ENCODE measurements at regions of chr11 and their contacts with region 1.

Region 1: DNA sequence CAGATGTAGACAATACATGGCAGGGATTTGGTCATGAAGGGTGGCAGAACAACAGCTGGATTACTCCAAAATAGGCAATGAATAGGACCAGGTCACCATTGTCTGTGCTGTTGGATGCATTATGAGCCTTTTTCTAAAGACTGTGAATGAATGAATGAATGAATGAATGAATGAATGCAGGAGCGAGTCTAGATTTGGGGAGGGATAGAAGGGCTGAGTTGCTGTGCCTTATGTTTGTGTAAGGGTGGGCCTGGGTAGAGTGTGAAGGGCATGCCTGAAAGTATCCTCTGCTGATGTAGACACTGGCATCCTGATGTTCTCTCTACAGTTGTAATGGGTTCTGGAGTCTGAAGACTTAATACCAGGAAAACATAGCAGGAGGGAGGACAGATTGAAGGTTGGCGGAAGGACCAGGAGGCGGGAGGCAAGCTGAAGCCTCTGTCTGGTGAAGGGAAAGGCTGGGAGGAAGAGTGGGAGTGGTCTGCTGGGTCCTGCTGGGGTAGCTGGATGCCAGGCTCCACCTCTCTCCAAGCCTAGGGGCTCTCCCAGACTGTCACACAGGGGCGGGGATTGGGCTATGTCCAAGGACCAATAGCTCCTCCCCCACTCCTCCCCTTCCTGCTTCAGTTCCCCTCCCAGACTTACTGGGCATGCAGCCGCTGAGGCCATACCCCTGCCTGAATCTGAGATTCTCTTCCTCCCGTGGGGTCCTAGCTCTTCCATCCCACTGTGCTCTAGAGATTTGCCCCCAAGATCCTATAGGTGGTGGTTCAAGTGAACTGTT is 4.8 kb downstream of the TRIM3 start:
- DNase-seq: peak in 1 of 35 experiments; percentile 20
- ATAC-seq: no peak
- H3K4me3 ChIP-seq: no peak overlapping the region
- H3K4me3 Mint-ChIP-seq: no peak overlapping the region
- H3K27ac ChIP-seq: no peak overlapping the region
- H3K27ac Mint-ChIP-seq: no peak overlapping the region
- H3K4me1 ChIP-seq: peaks cover 7 to 12% of the 10 kb centered on the region in 2 experiments
- H3K4me1 Mint-ChIP-seq: peaks cover 15 to 22% (median 17%) of the 10 kb centered on the region in 3 donors
- H3K27me3 ChIP-seq: peaks cover 0 to 3% of the 10 kb centered on the region in 2 experiments
- H3K27me3 Mint-ChIP-seq: no peaks in the 10 kb centered on the region

Region 2: DNA sequence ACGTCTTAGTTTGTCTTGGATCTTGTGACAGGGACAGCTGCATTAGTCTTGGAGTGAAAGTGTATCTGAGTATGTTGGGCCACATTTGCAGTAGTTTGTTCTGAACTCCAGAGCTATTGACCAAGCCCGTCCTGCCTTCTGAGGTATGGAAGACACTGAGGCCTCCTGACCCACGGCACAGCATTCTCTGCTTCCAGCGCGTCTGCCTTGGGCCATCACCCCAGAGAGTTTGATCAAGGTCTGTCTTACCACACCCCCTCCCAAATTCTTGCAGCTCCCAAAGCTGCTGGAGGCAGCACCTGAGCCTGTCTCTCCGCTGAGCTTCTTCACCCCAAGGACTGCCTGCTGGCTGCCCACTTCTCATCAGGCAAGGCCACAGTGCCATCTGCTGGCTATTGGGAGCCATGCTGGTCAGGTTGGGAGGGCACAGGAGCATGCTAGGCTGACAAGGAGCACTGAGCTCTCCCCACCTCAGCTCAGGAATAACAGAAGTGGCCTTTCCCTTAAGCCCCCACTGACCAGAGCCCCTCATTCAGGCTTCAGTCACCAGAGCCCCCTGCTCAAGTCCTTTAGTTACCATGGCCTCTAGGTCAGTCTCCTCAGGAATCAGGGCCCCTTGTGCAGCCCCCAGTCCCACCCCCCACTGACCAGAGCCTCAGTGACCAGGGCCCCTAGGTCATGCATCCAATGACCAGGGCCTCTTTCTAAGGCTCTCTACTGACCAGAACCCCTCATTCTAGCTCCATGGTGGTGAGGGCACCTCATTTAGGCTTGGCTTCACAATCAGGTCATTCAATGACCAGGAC is 105.8 kb before region 1 on chr11:
- CTCF ChIA-PET with region 1: interaction called in 1 of 2 experiments, 10 read pairs
- POLR2A ChIA-PET with region 1: no interaction called
- DNase-seq: peak; percentile 20 to 74 (median 53)
- ATAC-seq: peak; percentile 81 to 92 (median 87)
- H3K4me3 ChIP-seq: no peak overlapping the region
- H3K4me3 Mint-ChIP-seq: no peak overlapping the region
- H3K27ac ChIP-seq: no peak overlapping the region
- H3K27ac Mint-ChIP-seq: no peak overlapping the region
- H3K4me1 ChIP-seq: peaks cover 0 to 3% of the 10 kb centered on the region in 2 experiments
- H3K4me1 Mint-ChIP-seq: no peaks in the 10 kb centered on the region
- H3K27me3 ChIP-seq: peaks cover 0 to 4% of the 10 kb centered on the region in 2 experiments
- H3K27me3 Mint-ChIP-seq: no peaks in the 10 kb centered on the region

Region 3: DNA sequence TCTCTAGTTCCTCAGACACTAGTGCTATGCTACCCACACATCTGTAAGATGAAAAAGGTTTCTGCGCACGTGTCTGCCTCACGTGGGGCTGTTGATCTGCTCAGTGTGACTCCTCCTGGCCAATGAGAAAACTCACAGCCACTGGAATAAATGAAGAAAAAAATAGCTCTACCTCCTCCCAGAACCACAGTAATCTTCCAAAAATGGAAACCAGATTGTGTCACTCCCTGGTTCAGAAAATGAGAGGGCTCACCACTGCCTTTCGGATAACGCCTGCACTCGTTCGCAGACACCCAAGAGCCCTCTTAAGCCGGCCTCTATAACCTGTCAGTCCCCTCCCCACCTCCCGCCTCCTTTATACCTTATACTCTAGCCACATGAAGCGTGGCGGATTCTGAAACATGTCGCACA is 55.1 kb before region 1 on chr11:
- CTCF ChIA-PET with region 1: no interaction called
- POLR2A ChIA-PET with region 1: no interaction called
- DNase-seq: peak; percentile 38 to 84 (median 72)
- ATAC-seq: peak; percentile 87 to 92 (median 88)
- H3K4me3 ChIP-seq: peak overlapping the region; percentile 8 to 18
- H3K4me3 Mint-ChIP-seq: no peak overlapping the region
- H3K27ac ChIP-seq: peak overlapping the region; percentile 69
- H3K27ac Mint-ChIP-seq: no peak overlapping the region
- H3K4me1 ChIP-seq: peaks cover 41 to 84% of the 10 kb centered on the region in 2 experiments
- H3K4me1 Mint-ChIP-seq: peaks cover 13 to 39% (median 37%) of the 10 kb centered on the region in 3 donors
- H3K27me3 ChIP-seq: no peaks in the 10 kb centered on the region
- H3K27me3 Mint-ChIP-seq: no peaks in the 10 kb centered on the region

Measured in T-cell (primary cell).